ENCODE measurements at regions of chr22 and their contacts with region 1.

Region 1: GRCh38 chr22:39932918-39933649 is 27.1 kb upstream of the TMA7B start:
- DNase-seq: peak; percentile 78 to 86
- H3K4me3 ChIP-seq: no peak overlapping the region
- H3K27ac ChIP-seq: no peak overlapping the region
- H3K4me1 ChIP-seq: peaks cover 0 to 11% (median 4%) of the 10 kb centered on the region in 4 experiments; a peak in 5 of 7 replicates
- H3K27me3 ChIP-seq: no peaks in the 10 kb centered on the region
- CTCF ChIP-seq: peak; percentile 82 to 95 (median 90)
- EP300 ChIP-seq: peak in 1 of 2 experiments; percentile 74; a peak in 1 of 3 replicates
- POLR2A ChIP-seq: no peak
- RAD21 ChIP-seq: peak; percentile 77 to 84

Region 2: GRCh38 chr22:39883057-39883456 is 50.0 kb before region 1 on chr22:
- CTCF ChIA-PET with region 1: no interaction called
- POLR2A ChIA-PET with region 1: no interaction called
- DNase-seq: no peak
- H3K4me3 ChIP-seq: no peak overlapping the region
- H3K27ac ChIP-seq: no peak overlapping the region
- H3K4me1 ChIP-seq: no peaks in the 10 kb centered on the region
- H3K27me3 ChIP-seq: no peaks in the 10 kb centered on the region
- CTCF ChIP-seq: no peak
- EP300 ChIP-seq: no peak
- POLR2A ChIP-seq: no peak
- RAD21 ChIP-seq: no peak

Region 3: DNA sequence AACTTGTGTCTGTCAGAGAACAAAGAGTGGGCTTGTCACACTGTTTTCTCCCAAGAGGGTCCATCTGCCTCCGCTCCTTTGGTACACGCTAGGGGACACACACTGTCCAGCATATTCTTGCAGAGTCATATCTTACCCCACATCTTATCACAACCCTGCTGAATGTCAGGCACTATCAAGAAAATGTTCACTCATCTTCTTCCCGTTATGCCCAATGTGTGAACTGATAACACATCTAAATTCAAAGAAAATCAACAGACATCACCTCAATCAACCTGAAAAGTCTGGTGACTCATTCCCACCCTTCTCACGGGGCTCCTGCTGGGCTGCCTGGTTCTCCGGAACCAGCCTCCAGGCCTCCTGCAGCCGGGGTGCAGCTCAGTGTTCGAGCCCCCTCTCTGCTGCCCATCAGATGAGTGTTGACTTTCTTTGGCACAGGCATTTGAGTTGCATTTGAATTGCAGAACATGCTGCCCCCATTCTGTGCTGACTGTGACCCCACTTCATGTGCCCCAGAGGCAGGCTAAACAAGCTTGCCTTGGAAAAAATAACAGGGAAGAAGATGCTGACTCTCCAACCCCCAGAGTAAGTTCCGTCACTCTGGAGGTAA is 12.8 kb before region 1 on chr22:
- CTCF ChIA-PET with region 1: interaction called, 29 read pairs
- POLR2A ChIA-PET with region 1: interaction called, 3 read pairs
- DNase-seq: no peak
- H3K4me3 ChIP-seq: no peak overlapping the region
- H3K27ac ChIP-seq: no peak overlapping the region
- H3K4me1 ChIP-seq: peaks cover 0 to 9% (median 2%) of the 10 kb centered on the region in 4 experiments; a peak in 6 of 7 replicates
- H3K27me3 ChIP-seq: no peaks in the 10 kb centered on the region
- CTCF ChIP-seq: no peak
- EP300 ChIP-seq: no peak
- POLR2A ChIP-seq: no peak
- RAD21 ChIP-seq: no peak

Region 4: DNA sequence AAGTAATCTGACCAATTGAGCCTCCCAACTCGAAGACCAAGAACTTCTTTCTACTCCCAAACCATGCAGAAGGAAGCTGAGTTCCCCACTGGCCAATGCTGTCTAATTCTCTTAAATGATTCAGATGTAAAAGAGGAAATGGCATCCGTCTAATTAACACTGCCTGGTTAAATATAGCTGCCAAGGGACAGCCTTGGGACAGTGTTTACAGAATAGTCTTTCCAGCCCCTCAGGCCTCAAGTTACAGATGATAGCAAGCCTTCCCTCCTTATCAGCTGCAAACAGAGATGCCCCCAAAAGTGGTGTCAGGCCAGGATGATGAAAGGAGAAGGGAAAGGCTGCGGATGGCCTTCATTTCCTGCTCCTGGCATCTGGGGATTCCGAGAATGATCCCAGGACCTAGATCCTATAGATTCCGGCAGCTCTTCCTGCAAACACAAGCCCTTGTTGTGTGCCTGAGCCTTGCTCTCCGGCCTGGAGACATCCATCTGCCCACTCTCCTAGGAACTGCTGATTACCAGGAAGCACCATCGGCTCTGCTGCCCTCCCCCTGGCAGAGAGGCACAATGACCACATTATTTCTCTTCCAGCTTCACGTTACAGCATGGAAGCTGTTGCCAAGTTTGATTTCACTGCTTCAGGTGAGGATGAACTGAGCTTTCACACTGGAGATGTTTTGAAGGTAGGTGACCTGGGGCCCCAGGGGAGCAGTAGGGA is 13.6 kb after region 1 on chr22:
- CTCF ChIA-PET with region 1: interaction called, 28 read pairs
- POLR2A ChIA-PET with region 1: interaction called, 11 read pairs
- DNase-seq: no peak
- H3K4me3 ChIP-seq: no peak overlapping the region
- H3K27ac ChIP-seq: no peak overlapping the region
- H3K4me1 ChIP-seq: peaks cover 8 to 22% (median 11%) of the 10 kb centered on the region in 4 experiments; a peak in 5 of 7 replicates
- H3K27me3 ChIP-seq: no peaks in the 10 kb centered on the region; a peak in 1 of 7 replicates
- CTCF ChIP-seq: no peak
- EP300 ChIP-seq: no peak
- POLR2A ChIP-seq: no peak
- RAD21 ChIP-seq: no peak

Region 5: DNA sequence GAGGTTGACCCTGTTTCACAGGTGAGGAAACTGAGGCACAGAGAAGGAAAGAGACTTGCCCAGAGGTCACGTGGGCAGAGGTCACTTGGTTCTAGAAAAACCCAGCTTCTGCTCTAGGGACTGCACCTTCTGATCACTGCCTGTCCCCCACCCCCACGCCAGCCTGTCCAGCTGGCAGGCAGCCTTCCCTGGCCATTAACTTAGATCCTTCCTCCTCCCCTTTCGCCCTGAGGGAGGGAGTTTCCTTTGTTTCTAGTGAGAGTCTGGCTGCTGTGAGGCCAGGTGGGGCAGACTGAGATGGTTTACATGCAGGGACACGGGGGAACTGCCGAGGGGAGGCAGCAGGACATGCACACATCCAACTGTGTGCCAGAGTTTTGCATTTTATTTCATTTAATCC is 64.9 kb after region 1 on chr22:
- CTCF ChIA-PET with region 1: interaction called, 35 read pairs
- POLR2A ChIA-PET with region 1: interaction called, 7 read pairs
- DNase-seq: peak in 1 of 2 experiments; percentile 59
- H3K4me3 ChIP-seq: peak overlapping the region in 3 of 4 experiments; percentile 7 to 30 (median 17); a peak in 4 of 8 replicates
- H3K27ac ChIP-seq: peak overlapping the region; percentile 2; the same call in 1 of the 2 replicates
- H3K4me1 ChIP-seq: peaks cover 26 to 59% (median 46%) of the 10 kb centered on the region in 4 experiments
- H3K27me3 ChIP-seq: peaks cover 0 to 19% (median 13%) of the 10 kb centered on the region in 4 experiments; a peak in 6 of 7 replicates
- CTCF ChIP-seq: no peak
- EP300 ChIP-seq: no peak
- POLR2A ChIP-seq: no peak
- RAD21 ChIP-seq: no peak

Region 6: GRCh38 chr22:40009292-40009769 is 76.2 kb after region 1 on chr22:
- CTCF ChIA-PET with region 1: interaction called, 21 read pairs
- POLR2A ChIA-PET with region 1: interaction called, 8 read pairs
- DNase-seq: peak in 1 of 2 experiments; percentile 74
- H3K4me3 ChIP-seq: peak overlapping the region in 2 of 4 experiments; percentile 12 to 17; a peak in 3 of 8 replicates
- H3K27ac ChIP-seq: no peak overlapping the region
- H3K4me1 ChIP-seq: peaks cover 14 to 25% (median 18%) of the 10 kb centered on the region in 4 experiments
- H3K27me3 ChIP-seq: no peaks in the 10 kb centered on the region
- CTCF ChIP-seq: no peak
- EP300 ChIP-seq: no peak
- POLR2A ChIP-seq: no peak
- RAD21 ChIP-seq: no peak

Region 7: GRCh38 chr22:40036591-40037225 is 103.6 kb after region 1 on chr22:
- CTCF ChIA-PET with region 1: interaction called, 31 read pairs
- POLR2A ChIA-PET with region 1: no interaction called
- DNase-seq: peak; percentile 58 to 77
- H3K4me3 ChIP-seq: no peak overlapping the region
- H3K27ac ChIP-seq: no peak overlapping the region
- H3K4me1 ChIP-seq: no peaks in the 10 kb centered on the region
- H3K27me3 ChIP-seq: peaks cover 0 to 6% (median 2%) of the 10 kb centered on the region in 4 experiments; a peak in 2 of 7 replicates
- CTCF ChIP-seq: peak; percentile 92 to 98 (median 98)
- EP300 ChIP-seq: no peak
- POLR2A ChIP-seq: no peak
- RAD21 ChIP-seq: peak; percentile 98

Region 8: DNA sequence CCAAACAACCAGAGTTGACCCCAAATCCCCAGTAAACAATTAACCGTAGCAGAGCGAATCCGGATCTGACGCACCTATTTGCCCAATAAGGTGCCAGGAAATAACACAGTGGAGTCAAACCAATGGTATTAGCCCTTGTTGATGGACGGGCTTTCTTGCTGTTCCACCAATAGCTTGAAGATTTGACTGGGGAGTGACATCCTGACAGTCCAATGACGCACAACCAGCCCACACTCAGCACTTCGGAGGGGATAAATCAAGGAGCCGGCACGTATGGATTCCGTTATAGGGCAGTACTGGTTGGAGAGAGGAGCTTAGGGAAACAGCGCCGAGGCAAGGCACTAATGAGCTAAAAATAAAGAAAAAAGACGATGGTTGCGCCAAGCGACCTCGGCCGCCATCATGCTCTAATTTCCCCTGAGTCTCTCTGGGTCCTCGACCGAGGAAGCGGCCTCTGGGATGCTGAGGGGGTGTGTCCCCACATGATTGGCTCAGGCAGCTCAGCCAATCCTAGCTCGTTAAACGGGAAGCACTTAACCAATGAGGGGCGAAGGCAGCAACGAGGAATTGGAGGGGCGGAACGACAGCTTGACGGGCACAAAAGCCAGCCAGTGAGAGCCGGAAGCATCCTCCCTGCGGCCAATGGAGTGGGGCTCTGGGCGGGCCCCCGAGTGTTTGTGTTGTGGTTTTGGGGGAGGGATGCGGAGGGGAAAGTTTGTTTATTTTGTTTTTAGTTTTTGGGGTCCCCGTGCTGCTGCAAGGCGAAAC is 111.2 kb after region 1 on chr22:
- CTCF ChIA-PET with region 1: interaction called, 13 read pairs
- POLR2A ChIA-PET with region 1: interaction called, 5 read pairs
- DNase-seq: peak; percentile 97 to 99
- H3K4me3 ChIP-seq: peak overlapping the region; percentile 68 to 93 (median 84)
- H3K27ac ChIP-seq: peak overlapping the region; percentile 94
- H3K4me1 ChIP-seq: peaks cover 0 to 7% (median 2%) of the 10 kb centered on the region in 4 experiments; a peak in 3 of 7 replicates
- H3K27me3 ChIP-seq: peaks cover 0 to 4% (median 2%) of the 10 kb centered on the region in 4 experiments; a peak in 2 of 7 replicates
- CTCF ChIP-seq: no peak; a peak in 1 of 4 replicates
- EP300 ChIP-seq: no peak
- POLR2A ChIP-seq: peak; percentile 95 to 97
- RAD21 ChIP-seq: no peak